PC-9 (cell line): ENCODE measurements at regions of chr4 and their contacts with region 1.

Region 1: GRCh38 chr4:83252782-83253405 is 31.7 kb downstream of the COQ2 start:
- DNase-seq: peak; percentile 39 to 51
- H3K4me3 ChIP-seq: no peak overlapping the region
- H3K27ac ChIP-seq: no peak overlapping the region
- H3K4me1 ChIP-seq: peaks cover 34% of the 10 kb centered on the region
- H3K27me3 ChIP-seq: no peaks in the 10 kb centered on the region
- CTCF ChIP-seq: peak; percentile 69

Region 2: GRCh38 chr4:83074086-83074704 is 178.7 kb before region 1 on chr4:
- CTCF ChIA-PET with region 1: interaction called, 14 read pairs
- POLR2A ChIA-PET with region 1: no interaction called
- intact Hi-C with region 1: no loop called
- DNase-seq: peak; percentile 23 to 38
- H3K4me3 ChIP-seq: no peak overlapping the region
- H3K27ac ChIP-seq: no peak overlapping the region
- H3K4me1 ChIP-seq: no peaks in the 10 kb centered on the region
- H3K27me3 ChIP-seq: no peaks in the 10 kb centered on the region
- CTCF ChIP-seq: peak; percentile 67

Region 3: GRCh38 chr4:83128240-83128929 is 124.5 kb before region 1 on chr4:
- CTCF ChIA-PET with region 1: interaction called, 13 read pairs
- POLR2A ChIA-PET with region 1: no interaction called
- intact Hi-C with region 1: no loop called
- DNase-seq: peak; percentile 11 to 84
- H3K4me3 ChIP-seq: no peak overlapping the region
- H3K27ac ChIP-seq: no peak overlapping the region; the same call in none of the 2 replicates
- H3K4me1 ChIP-seq: peaks cover 9% of the 10 kb centered on the region
- H3K27me3 ChIP-seq: no peaks in the 10 kb centered on the region
- CTCF ChIP-seq: no peak

Region 4: GRCh38 chr4:83212041-83212851 is 40.6 kb before region 1 on chr4:
- CTCF ChIA-PET with region 1: no interaction called
- POLR2A ChIA-PET with region 1: interaction called, 3 read pairs
- intact Hi-C with region 1: loop called (anchors 5 kb)
- DNase-seq: peak; percentile 44 to 76
- H3K4me3 ChIP-seq: no peak overlapping the region
- H3K27ac ChIP-seq: peak overlapping the region; percentile 51
- H3K4me1 ChIP-seq: peaks cover 39% of the 10 kb centered on the region
- H3K27me3 ChIP-seq: no peaks in the 10 kb centered on the region
- CTCF ChIP-seq: no peak